AG04450 (cell line): ENCODE measurements at regions of chr12 and their contacts with region 1.

Region 1: DNA sequence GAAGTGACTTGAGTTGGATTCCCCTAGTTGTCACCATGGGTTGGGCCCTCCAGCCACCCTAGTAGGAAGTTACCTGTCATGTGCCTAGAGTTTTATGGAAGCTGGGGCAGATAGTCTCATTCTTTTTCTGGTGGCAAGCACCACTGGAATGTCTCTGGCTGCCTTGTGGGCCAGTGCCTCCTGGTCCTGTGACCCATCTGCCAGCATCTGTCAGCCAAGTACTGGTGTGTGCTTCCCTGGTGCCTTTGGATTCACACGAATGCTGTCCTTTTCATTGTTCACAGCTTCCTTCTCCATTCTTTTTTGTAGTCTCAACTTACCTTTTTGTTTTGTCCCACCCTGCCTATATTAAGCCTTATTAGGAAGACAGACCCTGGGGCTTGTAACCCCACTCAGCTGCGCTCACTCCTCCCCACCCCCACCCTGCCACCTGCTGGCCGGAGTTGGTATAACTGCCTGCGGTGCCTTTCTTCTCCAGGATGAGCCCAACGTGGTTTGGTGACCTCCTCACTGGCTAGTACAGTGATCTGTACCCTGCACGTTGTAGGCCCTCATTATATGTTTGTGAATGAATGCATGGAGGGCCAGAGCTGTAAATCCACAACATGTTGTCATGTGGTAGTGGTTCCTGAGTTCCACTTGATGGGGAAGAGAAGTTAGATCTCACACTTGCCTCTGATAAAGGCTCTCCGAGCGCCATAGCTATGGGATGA is 125.7 kb downstream of the TSPAN9 start:
- DNase-seq: no peak
- H3K4me3 ChIP-seq: no peak overlapping the region
- H3K27ac ChIP-seq: no peak overlapping the region
- H3K27me3 ChIP-seq: no peaks in the 10 kb centered on the region
- CTCF ChIP-seq: peak; percentile 95

Region 2: DNA sequence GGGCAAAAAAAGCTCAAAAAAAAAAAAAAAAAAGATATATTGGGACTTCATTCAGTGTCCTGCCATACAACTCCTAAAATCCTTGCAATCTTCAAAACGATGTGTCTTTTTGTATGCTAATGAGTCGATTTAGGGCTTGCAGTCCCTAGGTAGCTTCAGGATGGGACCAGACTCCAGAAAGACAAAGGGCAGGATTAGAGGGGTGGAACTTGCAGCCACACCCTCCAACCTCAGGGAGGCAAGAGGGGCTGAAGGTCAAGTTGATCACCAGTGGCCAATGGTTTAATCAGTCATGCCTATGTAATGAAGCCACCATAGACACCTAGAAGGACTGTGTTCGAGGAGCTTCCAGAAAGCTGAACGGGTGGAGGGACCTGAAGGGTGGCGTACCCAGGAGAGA is 214.4 kb before region 1 on chr12:
- CTCF ChIA-PET with region 1: no interaction called
- POLR2A ChIA-PET with region 1: no interaction called
- DNase-seq: no peak
- H3K4me3 ChIP-seq: no peak overlapping the region
- H3K27ac ChIP-seq: no peak overlapping the region
- H3K27me3 ChIP-seq: no peaks in the 10 kb centered on the region
- CTCF ChIP-seq: no peak

Region 3: GRCh38 chr12:3158851-3159465 is 43.9 kb before region 1 on chr12:
- CTCF ChIA-PET with region 1: interaction called, 12 read pairs
- POLR2A ChIA-PET with region 1: no interaction called
- DNase-seq: no peak
- H3K4me3 ChIP-seq: no peak overlapping the region
- H3K27ac ChIP-seq: peak overlapping the region; percentile 96
- H3K27me3 ChIP-seq: no peaks in the 10 kb centered on the region
- CTCF ChIP-seq: no peak

Region 4: GRCh38 chr12:3186546-3187215 is 16.2 kb before region 1 on chr12:
- CTCF ChIA-PET with region 1: interaction called, 33 read pairs
- POLR2A ChIA-PET with region 1: no interaction called
- DNase-seq: no peak
- H3K4me3 ChIP-seq: no peak overlapping the region
- H3K27ac ChIP-seq: no peak overlapping the region
- H3K27me3 ChIP-seq: no peaks in the 10 kb centered on the region
- CTCF ChIP-seq: no peak

Region 5: DNA sequence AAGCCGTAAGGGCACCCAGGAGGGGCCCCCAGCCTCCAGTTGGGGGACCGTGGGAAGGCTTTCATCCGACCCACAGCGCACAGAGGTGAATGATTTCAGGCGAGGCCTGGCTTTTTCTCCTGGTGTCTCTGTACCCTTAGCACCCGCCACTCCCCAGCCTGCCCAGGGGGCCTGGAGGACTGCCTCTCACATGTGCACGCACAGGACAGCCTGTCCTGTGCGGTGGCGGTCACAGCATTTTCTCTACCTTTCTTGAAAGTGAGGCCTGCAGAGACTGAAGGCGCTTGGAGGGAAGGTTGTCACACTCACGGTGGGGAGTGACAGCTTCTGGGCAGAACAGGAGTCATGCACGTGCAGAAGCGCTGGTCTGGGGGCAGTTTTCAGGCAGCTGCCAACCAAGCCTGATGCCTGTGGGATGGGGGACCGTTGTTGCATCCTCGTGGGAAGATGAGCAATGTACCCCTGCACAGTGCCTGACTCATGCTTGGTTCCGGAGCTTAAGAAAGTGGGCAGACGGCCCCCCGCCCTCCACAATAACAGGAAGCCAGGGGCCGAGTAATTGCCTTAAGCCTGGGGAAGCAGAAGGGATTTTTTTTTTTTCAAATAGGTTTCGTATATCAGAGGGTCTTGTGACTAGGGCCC is 22.4 kb after region 1 on chr12:
- CTCF ChIA-PET with region 1: interaction called, 31 read pairs
- POLR2A ChIA-PET with region 1: no interaction called
- DNase-seq: no peak
- H3K4me3 ChIP-seq: no peak overlapping the region
- H3K27ac ChIP-seq: peak overlapping the region; percentile 75
- H3K27me3 ChIP-seq: no peaks in the 10 kb centered on the region
- CTCF ChIP-seq: no peak

Region 6: GRCh38 chr12:3371018-3371417 is 168.1 kb after region 1 on chr12:
- CTCF ChIA-PET with region 1: no interaction called
- POLR2A ChIA-PET with region 1: no interaction called
- DNase-seq: no peak
- H3K4me3 ChIP-seq: no peak overlapping the region
- H3K27ac ChIP-seq: no peak overlapping the region
- H3K27me3 ChIP-seq: peaks cover 37% of the 10 kb centered on the region
- CTCF ChIP-seq: no peak

Region 7: DNA sequence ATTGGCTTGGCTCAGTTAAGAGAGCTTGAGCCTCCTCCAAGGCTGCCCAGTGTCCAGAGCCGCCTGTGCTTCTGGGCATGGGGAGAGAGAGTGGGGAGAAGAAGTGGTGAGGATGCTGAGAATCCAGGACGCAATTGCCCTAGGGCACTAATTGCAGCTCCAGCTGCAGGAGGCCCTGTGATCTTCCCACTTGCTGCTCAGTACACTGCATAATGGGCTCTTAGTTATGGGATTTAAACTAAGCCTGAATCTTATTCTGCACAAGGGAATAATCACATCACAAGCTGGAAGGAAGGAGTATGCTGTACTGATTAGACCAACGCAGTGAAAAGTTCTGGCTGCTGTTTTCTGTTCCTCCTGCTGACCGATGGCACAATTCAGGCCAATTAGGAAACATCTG is 187.1 kb after region 1 on chr12:
- CTCF ChIA-PET with region 1: no interaction called
- POLR2A ChIA-PET with region 1: no interaction called
- DNase-seq: no peak
- H3K4me3 ChIP-seq: no peak overlapping the region
- H3K27ac ChIP-seq: no peak overlapping the region
- H3K27me3 ChIP-seq: no peaks in the 10 kb centered on the region
- CTCF ChIP-seq: no peak